Right ventricle myocardium superior (tissue), 1 donor: ENCODE measurements at regions of chr3 and their contacts with region 1.

Region 1: GRCh38 chr3:45656575-45657363 is 32.4 kb upstream of the SACM1L start:
- DNase-seq: peak; percentile 93
- ATAC-seq: peak; percentile 86

Region 2: DNA sequence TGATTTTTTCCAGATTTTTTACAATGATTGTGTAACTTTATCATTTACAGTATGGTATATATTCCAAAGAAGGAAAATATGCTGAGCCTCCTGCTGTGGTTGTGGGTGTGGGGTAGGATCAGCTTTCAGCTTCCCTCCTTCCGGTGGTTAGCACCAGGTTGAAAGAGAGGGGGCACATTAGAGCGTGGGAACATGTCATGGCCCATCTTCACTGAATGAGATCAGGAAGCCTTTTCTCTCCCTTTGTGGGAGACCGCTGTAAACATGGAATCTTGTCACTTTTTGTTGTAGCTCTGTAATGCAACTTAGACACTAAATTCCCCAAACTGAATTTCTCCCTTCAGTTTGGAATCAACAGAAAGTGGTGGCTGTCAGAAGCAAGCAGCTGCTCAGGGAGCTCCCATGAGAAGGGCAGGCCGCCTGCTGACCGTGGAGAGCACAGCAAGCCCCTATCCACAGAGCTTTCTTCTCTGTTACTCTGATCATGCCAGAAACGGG is 148.9 kb before region 1 on chr3:
- intact Hi-C with region 1: loop called (anchors 2 kb)
- DNase-seq: peak; percentile 58
- ATAC-seq: peak; percentile 71